Heart right ventricle (tissue), 16 donors: ENCODE measurements at regions of chr21 and their contacts with region 1.

Region 1: DNA sequence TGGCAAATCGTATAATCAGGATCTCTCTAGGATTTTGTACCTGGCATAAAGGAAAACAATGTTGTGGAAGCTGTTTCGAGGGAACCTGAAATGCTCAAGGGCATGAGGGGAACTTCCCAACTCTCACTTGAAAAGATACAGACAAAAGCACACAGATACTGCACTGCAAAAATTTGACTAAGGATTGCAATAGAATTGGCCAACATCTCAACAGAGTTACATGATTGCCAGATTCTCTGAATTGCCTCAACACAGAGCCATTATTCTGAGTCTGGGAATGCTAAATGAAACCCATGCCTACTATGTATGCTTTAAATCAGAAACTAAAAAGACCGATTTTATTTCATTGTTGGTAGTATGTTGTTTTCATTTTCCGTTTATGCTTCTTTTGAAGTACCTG is 16.0 kb downstream of the KRTAP19-8 start:
- DNase-seq: no peak
- ATAC-seq: no peak
- H3K4me3 ChIP-seq: no peak overlapping the region
- H3K27ac ChIP-seq: no peak overlapping the region
- H3K4me1 ChIP-seq: no peaks in the 10 kb centered on the region
- H3K27me3 ChIP-seq: no peaks in the 10 kb centered on the region
- CTCF ChIP-seq: no peak

Region 2: GRCh38 chr21:31041295-31042079 is 19.2 kb after region 1 on chr21:
- intact Hi-C with region 1: loop called in 1 of 10 experiments (anchors 1 kb)
- DNase-seq: no peak
- ATAC-seq: no peak
- H3K4me3 ChIP-seq: no peak overlapping the region
- H3K27ac ChIP-seq: no peak overlapping the region
- H3K4me1 ChIP-seq: no peaks in the 10 kb centered on the region
- H3K27me3 ChIP-seq: peaks cover 0 to 14% (median 0%) of the 10 kb centered on the region in 7 donors
- CTCF ChIP-seq: no peak

Region 3: GRCh38 chr21:31098576-31099005 is 76.3 kb after region 1 on chr21:
- intact Hi-C with region 1: no loop called
- DNase-seq: peak; percentile 58 to 66
- ATAC-seq: peak in 7 of 8 donors; percentile 11 to 82 (median 69)
- H3K4me3 ChIP-seq: no peak overlapping the region
- H3K27ac ChIP-seq: no peak overlapping the region
- H3K4me1 ChIP-seq: peaks cover 0 to 7% (median 0%) of the 10 kb centered on the region in 9 donors
- H3K27me3 ChIP-seq: peaks cover 0 to 13% (median 9%) of the 10 kb centered on the region in 7 donors
- CTCF ChIP-seq: peak; percentile 79 to 89 (median 85)